Sciatic nerve (tissue), 2 donors: ENCODE measurements at regions of chr3 and their contacts with region 1.

Region 1: GRCh38 chr3:39291903-39292329 is 12.1 kb upstream of the CX3CR1 start:
- DNase-seq: peak; percentile 81
- ATAC-seq: peak; percentile 71

Region 2: GRCh38 chr3:39126532-39127071 is 165.3 kb before region 1 on chr3:
- intact Hi-C with region 1: loop called (anchors 10 kb)
- DNase-seq: no peak
- ATAC-seq: peak; percentile 62

Region 3: DNA sequence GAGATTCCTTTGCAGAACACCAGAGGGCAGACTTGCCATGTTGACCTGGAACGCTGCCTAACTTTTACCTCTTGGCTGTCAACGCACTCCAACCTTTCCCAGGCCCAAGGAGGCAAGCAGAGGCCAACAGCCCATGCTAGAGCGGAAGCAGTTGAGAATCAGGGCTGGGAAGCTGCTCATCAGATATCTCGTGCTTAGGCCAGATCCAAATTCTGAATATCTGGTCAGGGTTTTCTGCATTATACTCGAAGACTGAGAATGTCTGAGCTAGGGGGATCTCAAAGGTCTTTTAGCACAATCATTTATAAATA is 102.0 kb before region 1 on chr3:
- intact Hi-C with region 1: loop called (anchors 5 kb)
- DNase-seq: no peak
- ATAC-seq: peak; percentile 65